AG04449 (cell line): ENCODE measurements at regions of chr13 and their contacts with region 1.

Region 1: GRCh38 chr13:32650705-32651311 is 64.6 kb downstream of the PDS5B start:
- DNase-seq: no peak
- H3K4me3 ChIP-seq: no peak overlapping the region
- CTCF ChIP-seq: peak; percentile 71

Region 2: GRCh38 chr13:32581177-32581786 is 69.5 kb before region 1 on chr13:
- CTCF ChIA-PET with region 1: interaction called, 19 read pairs
- POLR2A ChIA-PET with region 1: no interaction called
- DNase-seq: no peak
- H3K4me3 ChIP-seq: no peak overlapping the region
- CTCF ChIP-seq: peak; percentile 14

Region 3: GRCh38 chr13:32586080-32586900 is 64.5 kb before region 1 on chr13 and contains the start of gene PDS5B:
- CTCF ChIA-PET with region 1: interaction called, 20 read pairs
- POLR2A ChIA-PET with region 1: no interaction called
- DNase-seq: peak; percentile 51
- H3K4me3 ChIP-seq: peak within 1 kb of the TSS; percentile 85
- CTCF ChIP-seq: peak; percentile 80

Region 4: DNA sequence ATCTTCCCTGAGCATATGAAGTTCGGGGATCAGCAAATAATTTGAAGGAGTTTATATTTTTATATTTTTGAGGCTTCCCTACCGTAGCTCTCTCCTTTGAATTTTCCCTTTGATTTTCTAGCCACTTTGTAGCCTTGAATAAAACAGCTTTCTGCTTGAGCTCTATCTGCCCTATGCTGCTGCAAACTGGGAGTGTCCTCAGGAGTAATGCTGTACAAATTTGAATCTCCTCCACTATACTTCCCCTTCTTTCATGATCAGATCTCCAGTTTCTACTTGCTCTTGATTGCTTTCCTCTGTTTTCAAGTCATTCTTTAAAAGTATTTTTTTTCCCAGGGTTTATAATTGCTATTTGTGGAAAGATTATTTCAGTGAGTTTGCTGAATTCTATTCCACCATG is 49.9 kb before region 1 on chr13:
- CTCF ChIA-PET with region 1: interaction called, 11 read pairs
- POLR2A ChIA-PET with region 1: no interaction called
- DNase-seq: no peak
- H3K4me3 ChIP-seq: no peak overlapping the region
- CTCF ChIP-seq: no peak

Region 5: DNA sequence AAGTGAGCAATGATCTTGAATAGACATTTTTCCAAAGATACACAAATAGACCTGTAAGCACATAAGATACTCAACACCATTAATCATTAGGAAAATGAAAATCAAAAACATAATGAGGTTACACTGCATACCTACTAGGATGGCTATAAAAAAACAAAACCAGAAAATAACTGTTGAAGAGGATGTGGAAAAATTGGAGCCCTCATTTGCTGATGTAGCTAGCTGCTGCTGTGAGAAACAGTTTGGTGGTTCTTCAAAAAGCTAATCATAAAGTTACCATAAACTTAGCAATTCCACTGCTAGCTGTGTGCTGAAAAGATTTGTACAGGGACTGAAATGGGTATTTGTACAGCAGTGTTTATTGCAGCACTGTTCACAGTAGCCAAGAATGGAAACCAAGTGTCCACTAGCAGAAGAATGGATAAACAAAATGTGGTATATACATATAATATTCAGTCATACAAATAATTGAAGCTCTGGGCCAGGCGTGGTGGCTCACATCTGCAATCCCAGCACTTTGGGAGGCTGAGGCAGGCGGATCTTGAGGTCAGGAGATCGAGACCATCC is 18.4 kb before region 1 on chr13:
- CTCF ChIA-PET with region 1: interaction called, 40 read pairs
- POLR2A ChIA-PET with region 1: no interaction called
- DNase-seq: no peak
- H3K4me3 ChIP-seq: no peak overlapping the region
- CTCF ChIP-seq: no peak

Region 6: DNA sequence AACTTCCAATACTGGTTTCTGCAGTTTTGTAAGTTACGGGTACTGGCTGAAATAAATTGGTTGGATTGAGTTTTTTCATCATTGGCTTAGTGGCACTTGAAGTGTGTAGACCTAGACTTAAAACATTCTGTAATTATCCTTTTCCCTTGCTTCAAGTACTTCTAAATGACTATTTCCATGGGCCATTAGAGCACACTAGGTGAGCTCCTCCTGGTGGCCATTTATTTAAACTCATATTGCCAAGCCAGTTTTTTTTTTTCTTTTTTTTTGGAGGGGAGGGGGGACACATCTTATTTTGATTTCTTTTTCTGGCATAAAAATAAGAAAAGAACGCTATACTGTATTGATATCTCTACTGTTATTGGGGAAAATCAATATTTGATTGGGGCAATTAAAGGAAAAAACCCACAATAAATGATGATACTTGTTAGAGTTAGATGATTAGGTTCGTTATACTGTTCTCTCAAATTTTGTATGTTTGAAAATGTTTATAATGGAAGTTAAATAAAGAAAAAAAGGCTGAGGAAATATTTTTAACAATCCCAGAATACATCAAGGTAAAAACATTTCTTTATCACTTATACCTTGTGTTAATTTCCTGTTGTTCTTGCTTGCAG is 18.3 kb after region 1 on chr13:
- CTCF ChIA-PET with region 1: interaction called, 60 read pairs
- POLR2A ChIA-PET with region 1: no interaction called
- DNase-seq: no peak
- H3K4me3 ChIP-seq: no peak overlapping the region
- CTCF ChIP-seq: peak; percentile 34

Region 7: DNA sequence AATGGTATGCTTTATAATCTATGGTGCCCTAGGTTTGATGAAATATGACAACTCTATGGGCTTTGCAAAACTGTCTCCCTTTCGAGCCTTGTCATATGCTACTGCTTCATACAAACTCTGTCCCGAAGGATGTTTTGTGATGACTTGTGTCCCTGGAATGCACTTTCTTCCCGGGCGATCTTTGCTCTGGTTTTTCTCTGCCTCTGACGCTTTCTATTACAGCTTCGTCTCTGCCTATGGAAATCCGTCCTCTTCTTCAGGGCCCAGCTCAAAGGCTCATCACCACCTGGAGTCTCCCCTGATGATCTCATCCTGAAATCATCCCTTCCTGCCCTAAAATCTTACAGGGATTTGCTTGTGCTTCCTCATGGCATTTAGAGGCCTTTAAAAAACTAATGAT is 173.9 kb after region 1 on chr13:
- CTCF ChIA-PET with region 1: no interaction called
- POLR2A ChIA-PET with region 1: no interaction called
- DNase-seq: peak; percentile 66
- H3K4me3 ChIP-seq: no peak overlapping the region
- CTCF ChIP-seq: no peak

Region 8: GRCh38 chr13:33194820-33195692 is 544.2 kb after region 1 on chr13:
- CTCF ChIA-PET with region 1: no interaction called
- POLR2A ChIA-PET with region 1: no interaction called
- DNase-seq: peak; percentile 93
- H3K4me3 ChIP-seq: no peak overlapping the region
- CTCF ChIP-seq: no peak